MCF 10A (cell line): ENCODE measurements at regions of chr1 and their contacts with region 1.

Region 1: DNA sequence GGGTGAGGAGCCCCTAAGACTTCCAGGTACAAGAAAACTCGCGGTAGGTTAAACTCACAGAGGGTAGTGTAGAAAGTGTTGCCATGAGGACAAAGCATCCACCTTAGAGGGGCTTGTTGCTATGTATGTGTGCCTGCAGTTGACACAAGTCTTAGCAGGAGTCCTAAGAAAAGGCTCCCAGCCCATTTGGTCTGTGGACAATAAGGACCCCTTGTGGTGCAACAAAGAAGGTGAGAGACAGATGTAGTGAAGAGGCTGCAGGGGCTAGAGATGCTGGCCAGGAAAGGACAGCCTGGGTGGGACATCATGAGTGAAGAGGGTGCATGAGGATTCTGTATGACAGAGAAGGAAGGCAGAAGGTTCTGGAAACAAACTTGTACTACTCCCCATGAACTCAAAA is 36.3 kb upstream of the IL10 start:
- DNase-seq: peak; percentile 67
- H3K4me3 Mint-ChIP-seq: no peak overlapping the region
- H3K27ac Mint-ChIP-seq: no peak overlapping the region
- H3K4me1 Mint-ChIP-seq: peaks cover 5% of the 10 kb centered on the region
- H3K27me3 Mint-ChIP-seq: peaks cover 41% of the 10 kb centered on the region
- CTCF ChIP-seq: peak; percentile 30

Region 2: GRCh38 chr1:206507284-206508129 is 301.1 kb before region 1 on chr1 and contains the start of gene RASSF5:
- CTCF ChIA-PET with region 1: no interaction called
- POLR2A ChIA-PET with region 1: no interaction called
- intact Hi-C with region 1: loop called (anchors 10 kb)
- DNase-seq: peak; percentile 87
- H3K4me3 Mint-ChIP-seq: peak within 1 kb of the TSS; percentile 72
- H3K27ac Mint-ChIP-seq: peak within 1 kb of the TSS; percentile 72
- H3K4me1 Mint-ChIP-seq: peaks cover 74% of the 10 kb centered on the region
- H3K27me3 Mint-ChIP-seq: no peaks in the 10 kb centered on the region
- CTCF ChIP-seq: no peak
- total RNA-seq, gene RASSF5: 8.3 and 9.6 TPM in 2 replicates

Region 3: GRCh38 chr1:206725109-206725963 is 83.3 kb before region 1 on chr1:
- CTCF ChIA-PET with region 1: interaction called, 37 read pairs
- POLR2A ChIA-PET with region 1: no interaction called
- intact Hi-C with region 1: no loop called
- DNase-seq: peak; percentile 78
- H3K4me3 Mint-ChIP-seq: no peak overlapping the region
- H3K27ac Mint-ChIP-seq: no peak overlapping the region
- H3K4me1 Mint-ChIP-seq: peaks cover 57% of the 10 kb centered on the region
- H3K27me3 Mint-ChIP-seq: no peaks in the 10 kb centered on the region
- CTCF ChIP-seq: peak; percentile 54

Region 4: DNA sequence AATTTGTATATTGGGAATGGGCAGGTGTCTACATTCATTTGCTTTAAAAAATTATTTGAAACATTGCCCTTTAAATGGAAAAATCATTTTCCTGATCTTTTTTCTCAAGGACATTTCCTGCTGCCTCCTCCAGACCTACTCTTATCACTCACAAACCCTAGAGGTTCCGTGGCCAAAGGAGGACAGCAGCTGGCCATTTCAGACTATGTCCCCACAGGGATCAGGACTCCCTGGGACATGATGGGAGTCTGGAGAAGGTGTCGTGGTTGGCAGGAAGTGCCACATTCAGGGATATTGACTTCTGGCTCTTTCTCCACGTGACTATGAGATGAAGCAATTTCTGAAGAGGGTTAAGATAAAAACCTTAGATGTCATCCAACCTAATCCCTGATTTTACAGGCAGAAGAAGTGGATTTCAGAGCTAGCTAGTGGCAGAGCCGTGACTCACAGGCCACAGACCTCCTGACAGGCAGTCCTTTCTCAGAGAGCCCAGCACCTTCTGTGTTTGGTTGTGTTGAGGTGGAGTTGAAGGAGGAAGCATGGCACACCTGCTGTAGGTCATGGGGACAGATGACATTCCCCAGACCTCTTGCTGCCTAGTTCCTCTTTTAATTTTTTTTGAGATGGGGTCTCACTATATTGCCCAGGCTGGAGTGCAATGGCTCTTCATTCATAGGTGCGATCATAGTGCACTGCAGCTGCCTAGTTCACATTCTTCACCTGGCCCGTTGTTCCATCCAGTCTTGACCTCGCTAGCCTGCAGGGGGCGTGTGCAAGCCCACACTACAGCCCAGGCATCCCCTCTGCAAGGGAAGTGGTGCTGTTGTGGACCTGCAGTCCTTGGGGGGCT is 10.9 kb before region 1 on chr1:
- CTCF ChIA-PET with region 1: interaction called, 27 read pairs
- POLR2A ChIA-PET with region 1: interaction called, 4 read pairs
- intact Hi-C with region 1: no loop called
- DNase-seq: peak; percentile 50
- H3K4me3 Mint-ChIP-seq: no peak overlapping the region
- H3K27ac Mint-ChIP-seq: no peak overlapping the region
- H3K4me1 Mint-ChIP-seq: no peaks in the 10 kb centered on the region
- H3K27me3 Mint-ChIP-seq: no peaks in the 10 kb centered on the region
- CTCF ChIP-seq: peak; percentile 68

Region 5: DNA sequence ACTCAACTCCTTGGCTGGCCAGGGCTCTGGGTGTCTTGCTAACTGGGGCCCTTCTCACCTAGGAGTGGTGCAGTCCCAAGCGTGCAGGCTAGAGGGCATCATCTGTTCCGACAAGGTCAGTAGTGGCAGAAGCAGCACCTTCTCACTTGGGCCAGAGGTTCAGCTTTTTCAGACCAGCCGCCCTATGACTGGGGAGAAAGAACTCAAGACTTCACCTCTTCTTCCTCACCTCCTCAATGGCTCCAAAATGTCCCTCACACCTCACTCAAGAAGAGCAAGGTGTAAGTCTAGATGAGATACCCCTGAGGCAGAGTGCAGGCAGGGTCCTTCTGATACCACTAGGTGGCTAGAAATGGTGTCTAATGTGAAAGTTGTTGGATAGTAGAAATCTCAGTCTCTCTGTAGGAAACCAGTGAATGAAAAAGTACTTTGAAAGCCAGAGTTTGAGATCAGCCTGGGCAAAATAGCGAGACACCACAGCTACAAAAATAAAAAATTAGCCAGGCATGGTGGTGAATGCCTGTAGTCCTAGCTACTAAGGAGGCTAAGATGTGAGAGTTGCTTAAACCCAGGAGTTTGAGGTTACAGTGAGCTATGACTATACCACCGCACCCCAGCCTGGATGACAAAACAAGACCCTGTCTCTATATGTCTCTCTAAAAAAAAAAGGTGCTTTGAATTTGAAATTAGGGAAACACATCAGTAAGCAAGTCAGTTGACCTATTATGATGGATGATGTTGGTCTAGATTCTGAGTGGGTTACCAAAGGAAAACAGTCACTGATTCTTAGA is 48.3 kb after region 1 on chr1:
- CTCF ChIA-PET with region 1: interaction called, 33 read pairs
- POLR2A ChIA-PET with region 1: interaction called, 3 read pairs
- intact Hi-C with region 1: no loop called
- DNase-seq: peak; percentile 54
- H3K4me3 Mint-ChIP-seq: no peak overlapping the region
- H3K27ac Mint-ChIP-seq: no peak overlapping the region
- H3K4me1 Mint-ChIP-seq: no peaks in the 10 kb centered on the region
- H3K27me3 Mint-ChIP-seq: peaks cover 18% of the 10 kb centered on the region
- CTCF ChIP-seq: peak; percentile 17

Region 6: GRCh38 chr1:206895830-206896242 is 87.2 kb after region 1 on chr1:
- CTCF ChIA-PET with region 1: interaction called, 33 read pairs
- POLR2A ChIA-PET with region 1: no interaction called
- intact Hi-C with region 1: no loop called
- DNase-seq: peak; percentile 99
- H3K4me3 Mint-ChIP-seq: peak overlapping the region; percentile 2
- H3K27ac Mint-ChIP-seq: peak overlapping the region; percentile 89
- H3K4me1 Mint-ChIP-seq: peaks cover 71% of the 10 kb centered on the region
- H3K27me3 Mint-ChIP-seq: no peaks in the 10 kb centered on the region
- CTCF ChIP-seq: no peak